Left cardiac atrium (tissue), 4 donors: ENCODE measurements at regions of chr18 and their contacts with region 1.

Region 1: DNA sequence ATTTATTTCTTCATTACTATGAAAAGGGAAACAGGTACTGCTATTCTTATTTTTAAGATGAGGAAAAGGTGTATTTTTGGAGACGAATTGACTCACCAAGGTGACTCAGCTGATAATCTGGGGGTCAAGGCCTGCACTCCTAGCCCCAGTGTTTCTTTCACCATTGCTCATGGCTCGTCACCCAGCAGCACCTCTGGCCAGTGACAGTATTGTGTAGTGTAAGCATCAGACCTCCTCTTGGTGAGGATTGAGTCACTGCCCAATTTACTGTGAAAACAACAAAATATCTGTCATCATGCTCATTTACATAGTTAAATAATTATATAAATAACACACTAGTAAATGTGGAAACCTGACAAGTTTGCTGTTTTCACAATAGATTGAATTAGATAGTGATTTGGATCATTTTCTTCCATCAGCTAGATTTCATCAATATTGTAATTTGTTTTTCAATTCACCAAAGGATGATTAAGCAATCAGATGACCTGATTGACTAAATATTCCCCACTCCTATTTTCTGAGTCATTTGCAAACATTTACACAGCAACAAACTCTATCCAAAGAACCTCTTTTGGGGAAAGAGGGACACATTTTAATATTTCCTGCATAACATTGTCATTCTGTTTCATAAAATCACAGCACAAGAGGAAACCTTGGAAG is 492.8 kb upstream of the RAB12 start:
- DNase-seq: no peak
- ATAC-seq: peak in 1 of 2 donors; percentile 42

Region 2: GRCh38 chr18:7926526-7926925 is 189.9 kb before region 1 on chr18:
- intact Hi-C with region 1: no loop called
- DNase-seq: no peak
- ATAC-seq: no peak

Region 3: GRCh38 chr18:8020132-8020846 is 96.2 kb before region 1 on chr18:
- intact Hi-C with region 1: no loop called
- DNase-seq: no peak
- ATAC-seq: no peak

Region 4: DNA sequence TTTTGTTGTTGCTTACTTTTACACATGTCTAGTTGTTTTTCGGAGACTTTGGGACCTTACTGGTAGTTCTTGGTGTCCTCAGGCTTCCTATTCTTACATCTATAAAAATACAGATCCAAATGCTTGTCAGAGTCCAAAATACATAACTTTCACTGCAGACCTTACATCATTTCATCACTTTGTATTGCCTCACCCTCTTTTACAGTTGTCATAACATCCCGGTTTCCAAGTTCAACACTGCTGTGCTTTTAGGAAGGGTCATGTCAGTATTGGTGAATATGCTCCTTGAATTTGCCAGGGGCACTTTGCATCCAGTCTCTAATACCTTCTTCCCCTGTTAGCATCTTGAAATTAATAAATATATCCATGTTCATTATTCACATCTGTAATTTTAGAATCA is 25.4 kb before region 1 on chr18:
- intact Hi-C with region 1: loop called in 1 of 2 experiments (anchors 2 kb)
- DNase-seq: no peak
- ATAC-seq: peak; percentile 47 to 49